Endothelial cell of umbilical vein (primary cell): ENCODE measurements at regions of chr5 and their contacts with region 1.

Region 1: DNA sequence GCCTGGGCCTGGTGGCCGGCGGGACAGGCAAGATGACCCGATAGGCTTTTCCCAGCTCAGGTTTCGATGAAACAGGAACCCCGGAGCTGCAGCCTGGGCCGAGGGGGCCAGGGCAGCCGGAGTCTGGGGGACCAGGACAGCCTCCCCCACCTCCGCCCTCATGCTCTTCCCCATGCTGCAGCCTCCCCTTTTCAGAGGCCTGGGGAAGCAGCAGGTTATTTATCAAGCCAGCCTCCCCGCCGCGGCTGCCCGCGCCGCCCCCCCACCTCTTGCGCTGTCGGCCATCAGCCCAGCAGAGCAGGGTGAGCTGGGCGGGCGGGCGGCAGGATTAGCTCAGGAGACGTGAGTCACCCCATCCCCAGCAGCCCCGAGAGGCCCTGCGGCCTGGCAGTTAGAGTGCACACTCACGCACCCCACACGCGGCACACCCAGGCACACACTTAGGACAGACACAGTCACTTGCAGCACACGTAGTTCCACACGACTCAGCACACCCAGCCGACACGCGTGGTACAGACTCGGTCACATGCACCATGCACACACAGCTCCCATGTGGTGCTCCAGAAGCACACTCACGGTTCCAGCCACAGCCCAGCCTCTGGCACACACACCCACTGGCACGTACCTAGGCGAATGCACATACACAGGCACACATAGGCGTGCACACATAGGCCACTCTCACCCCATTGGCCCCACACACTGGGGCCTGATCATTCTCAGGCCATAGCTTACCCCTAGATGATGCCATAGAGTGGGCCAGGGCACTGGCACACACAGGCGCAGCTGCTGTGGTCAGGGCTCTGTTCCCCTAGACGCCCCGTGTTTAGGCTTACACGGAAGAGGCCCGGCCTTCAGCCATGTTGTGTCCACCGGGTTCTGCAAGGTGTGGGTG is 13.0 kb downstream of the CXXC5 start:
- DNase-seq: peak; percentile 83
- H3K4me3 ChIP-seq: no peak overlapping the region
- H3K27ac ChIP-seq: no peak overlapping the region
- H3K4me1 ChIP-seq: peaks cover 33% of the 10 kb centered on the region
- H3K27me3 ChIP-seq: no peaks in the 10 kb centered on the region
- CTCF ChIP-seq: no peak
- POLR2A ChIP-seq: no peak

Region 2: GRCh38 chr5:139696894-139697658 is 35.9 kb after region 1 on chr5:
- CTCF ChIA-PET with region 1: interaction called, 4 read pairs
- POLR2A ChIA-PET with region 1: no interaction called
- dilution Hi-C with region 1: no loop called
- intact Hi-C with region 1: loop called (anchors 2 kb)
- DNase-seq: peak; percentile 55
- H3K4me3 ChIP-seq: peak overlapping the region in 2 of 3 experiments; percentile 6 to 24
- H3K27ac ChIP-seq: peak overlapping the region; percentile 4
- H3K4me1 ChIP-seq: peaks cover 6% of the 10 kb centered on the region
- H3K27me3 ChIP-seq: peaks cover 2 to 6% of the 10 kb centered on the region in 2 experiments
- CTCF ChIP-seq: no peak
- POLR2A ChIP-seq: no peak

Region 3: GRCh38 chr5:139759219-139759721 is 98.1 kb after region 1 on chr5:
- CTCF ChIA-PET with region 1: no interaction called
- POLR2A ChIA-PET with region 1: no interaction called
- dilution Hi-C with region 1: no loop called
- intact Hi-C with region 1: no loop called
- DNase-seq: no peak
- H3K4me3 ChIP-seq: no peak overlapping the region
- H3K27ac ChIP-seq: no peak overlapping the region
- H3K4me1 ChIP-seq: no peaks in the 10 kb centered on the region
- H3K27me3 ChIP-seq: peaks cover 31 to 38% of the 10 kb centered on the region in 2 experiments
- CTCF ChIP-seq: no peak
- POLR2A ChIP-seq: no peak